CD8-positive, alpha-beta T cell (primary cell): ENCODE measurements at regions of chr6 and their contacts with region 1.

Region 1: GRCh38 chr6:135880066-135880972 is 28.8 kb downstream of the PDE7B start:
- DNase-seq: peak; percentile 24 to 87 (median 64)
- ATAC-seq: peak; percentile 84
- H3K4me3 ChIP-seq: peak overlapping the region; percentile 49 to 53
- H3K4me3 Mint-ChIP-seq: peak overlapping the region; percentile 79
- H3K27ac ChIP-seq: peak overlapping the region; percentile 84 to 96
- H3K27ac Mint-ChIP-seq: peak overlapping the region; percentile 95
- H3K4me1 ChIP-seq: peaks cover 41% of the 10 kb centered on the region
- H3K4me1 Mint-ChIP-seq: peaks cover 56% of the 10 kb centered on the region
- H3K27me3 ChIP-seq: no peaks in the 10 kb centered on the region
- H3K27me3 Mint-ChIP-seq: no peaks in the 10 kb centered on the region
- CTCF ChIP-seq: no peak

Region 2: DNA sequence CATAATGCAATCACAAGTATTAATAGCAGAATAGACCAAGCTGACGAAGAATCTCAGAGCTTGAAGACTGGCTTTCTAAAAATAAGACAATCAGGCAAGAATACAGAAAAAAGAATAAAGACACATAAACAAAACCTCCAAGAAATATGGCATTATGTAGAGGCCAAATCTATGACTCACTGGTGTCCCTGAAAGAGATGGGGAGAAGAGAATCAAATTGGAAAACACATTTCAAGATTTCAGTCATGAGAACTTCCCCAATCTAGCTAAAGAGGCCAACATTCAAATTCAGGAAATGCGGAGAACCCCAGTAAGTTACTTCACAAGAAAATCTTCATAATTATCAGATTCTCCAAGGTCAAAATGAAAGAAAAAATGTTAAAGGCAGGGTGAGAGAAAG is 97.8 kb before region 1 on chr6:
- CTCF ChIA-PET with region 1: no interaction called
- POLR2A ChIA-PET with region 1: no interaction called
- intact Hi-C with region 1: no loop called
- DNase-seq: no peak
- ATAC-seq: no peak
- H3K4me3 ChIP-seq: no peak overlapping the region
- H3K4me3 Mint-ChIP-seq: no peak overlapping the region
- H3K27ac ChIP-seq: no peak overlapping the region
- H3K27ac Mint-ChIP-seq: no peak overlapping the region
- H3K4me1 ChIP-seq: no peaks in the 10 kb centered on the region
- H3K4me1 Mint-ChIP-seq: no peaks in the 10 kb centered on the region
- H3K27me3 ChIP-seq: no peaks in the 10 kb centered on the region
- H3K27me3 Mint-ChIP-seq: peaks cover 6% of the 10 kb centered on the region
- CTCF ChIP-seq: no peak

Region 3: GRCh38 chr6:135851442-135852271 is 28.7 kb before region 1 on chr6 and contains the start of gene PDE7B:
- CTCF ChIA-PET with region 1: no interaction called
- POLR2A ChIA-PET with region 1: interaction called, 7 read pairs
- intact Hi-C with region 1: loop called in 1 of 2 experiments (anchors 2 kb)
- DNase-seq: peak; percentile 5 to 64 (median 32)
- ATAC-seq: peak; percentile 74
- H3K4me3 ChIP-seq: peak within 1 kb of the TSS; percentile 38 to 42
- H3K4me3 Mint-ChIP-seq: peak within 1 kb of the TSS; percentile 78
- H3K27ac ChIP-seq: peak within 1 kb of the TSS in 1 of 2 experiments; percentile 17
- H3K27ac Mint-ChIP-seq: peak within 1 kb of the TSS; percentile 79
- H3K4me1 ChIP-seq: peaks cover 4% of the 10 kb centered on the region
- H3K4me1 Mint-ChIP-seq: peaks cover 32% of the 10 kb centered on the region
- H3K27me3 ChIP-seq: no peaks in the 10 kb centered on the region
- H3K27me3 Mint-ChIP-seq: no peaks in the 10 kb centered on the region
- CTCF ChIP-seq: no peak
- total RNA-seq, gene PDE7B: 0.11 to 0.22 TPM

Region 4: GRCh38 chr6:137475103-137475502 is 1594.8 kb after region 1 on chr6:
- CTCF ChIA-PET with region 1: no interaction called
- POLR2A ChIA-PET with region 1: no interaction called
- intact Hi-C with region 1: no loop called
- DNase-seq: peak in 2 of 9 experiments; percentile 15 to 34
- ATAC-seq: no peak
- H3K4me3 ChIP-seq: no peak overlapping the region
- H3K4me3 Mint-ChIP-seq: no peak overlapping the region
- H3K27ac ChIP-seq: no peak overlapping the region
- H3K27ac Mint-ChIP-seq: no peak overlapping the region
- H3K4me1 ChIP-seq: no peaks in the 10 kb centered on the region
- H3K4me1 Mint-ChIP-seq: no peaks in the 10 kb centered on the region
- H3K27me3 ChIP-seq: no peaks in the 10 kb centered on the region
- H3K27me3 Mint-ChIP-seq: peaks cover 21% of the 10 kb centered on the region
- CTCF ChIP-seq: no peak